AG04449 (cell line): ENCODE measurements at regions of chr15 and their contacts with region 1.

Region 1: DNA sequence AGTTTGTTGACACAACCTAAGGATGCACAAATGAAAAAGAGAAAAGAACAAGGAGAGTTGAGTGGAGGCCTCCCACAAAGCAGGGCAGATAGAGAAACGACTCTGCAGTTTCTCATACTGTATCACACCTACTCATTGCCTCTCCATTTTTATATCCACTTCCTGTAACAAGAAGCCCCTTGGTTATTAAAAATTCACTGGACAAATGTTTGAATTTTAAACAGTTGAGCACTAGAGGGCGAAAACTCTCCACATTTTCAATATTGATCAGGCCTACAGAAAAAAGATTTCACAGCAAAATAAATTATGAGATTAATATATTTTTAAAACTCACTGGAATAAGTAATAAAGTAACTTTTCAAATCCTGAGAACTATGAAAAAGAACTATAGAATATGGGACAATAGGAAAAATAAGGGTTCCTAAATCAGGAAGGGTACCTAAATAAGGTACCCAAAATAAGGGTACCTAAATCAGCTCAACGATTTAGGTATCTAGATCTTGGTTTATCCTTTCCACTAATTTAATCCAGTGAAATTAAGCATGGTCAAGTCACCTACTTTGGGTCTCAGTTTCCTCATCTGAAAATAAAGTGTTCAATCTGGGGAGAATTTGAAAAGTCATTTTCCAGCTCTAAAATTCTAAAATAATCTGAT is 47.0 kb upstream of the PPIB start:
- DNase-seq: no peak
- H3K4me3 ChIP-seq: no peak overlapping the region
- CTCF ChIP-seq: no peak

Region 2: DNA sequence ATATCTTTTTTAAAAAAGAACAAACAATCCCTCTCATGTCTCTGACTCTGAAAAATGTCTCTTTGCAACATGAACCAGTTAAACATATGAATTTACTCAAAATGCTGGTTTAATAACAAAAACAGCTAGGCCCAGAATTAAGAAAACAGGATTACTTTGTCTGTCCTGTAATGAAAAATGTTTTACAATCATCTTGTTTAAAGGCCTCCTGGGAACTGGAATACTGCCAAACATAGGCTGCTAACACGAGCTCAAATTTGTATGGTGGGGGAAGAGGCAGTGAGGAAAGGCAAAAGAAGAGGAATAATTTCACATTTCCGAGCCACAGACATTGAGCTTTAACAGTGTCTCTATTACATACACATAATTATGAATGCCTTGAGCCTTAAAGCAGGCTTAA is 14.7 kb after region 1 on chr15:
- CTCF ChIA-PET with region 1: interaction called, 13 read pairs
- POLR2A ChIA-PET with region 1: no interaction called
- DNase-seq: peak; percentile 24
- H3K4me3 ChIP-seq: no peak overlapping the region
- CTCF ChIP-seq: no peak

Region 3: DNA sequence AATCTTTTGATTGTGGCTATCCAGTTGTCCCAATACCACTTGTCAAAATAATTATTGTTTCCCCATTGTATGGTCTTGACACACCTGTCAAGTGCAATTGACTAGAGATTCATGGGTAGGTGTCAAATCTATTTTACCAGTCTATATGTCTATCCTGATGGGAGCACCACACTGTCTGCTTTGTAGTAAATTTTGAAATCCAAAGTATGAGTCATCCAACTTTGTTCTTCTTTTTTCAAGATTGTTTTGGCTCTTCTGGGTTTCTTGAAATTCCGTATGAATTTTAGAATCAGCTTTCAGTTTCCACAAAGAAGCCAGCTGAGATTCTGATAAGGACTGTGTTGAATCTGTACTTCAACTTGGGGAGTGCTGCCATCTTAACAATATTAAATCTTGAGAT is 74.2 kb after region 1 on chr15:
- CTCF ChIA-PET with region 1: no interaction called
- POLR2A ChIA-PET with region 1: no interaction called
- DNase-seq: peak; percentile 7
- H3K4me3 ChIP-seq: no peak overlapping the region
- CTCF ChIP-seq: no peak

Region 4: GRCh38 chr15:64355944-64356709 is 146.3 kb after region 1 on chr15 and contains the start of gene CSNK1G1:
- CTCF ChIA-PET with region 1: interaction called, 13 read pairs
- POLR2A ChIA-PET with region 1: no interaction called
- DNase-seq: peak; percentile 84
- H3K4me3 ChIP-seq: peak within 1 kb of the TSS; percentile 95
- CTCF ChIP-seq: peak; percentile 21

Region 5: GRCh38 chr15:64611085-64611725 is 401.4 kb after region 1 on chr15:
- CTCF ChIA-PET with region 1: no interaction called
- POLR2A ChIA-PET with region 1: no interaction called
- DNase-seq: no peak
- H3K4me3 ChIP-seq: no peak overlapping the region
- CTCF ChIP-seq: no peak